Caco-2 (cell line): ENCODE measurements at regions of chr11 and their contacts with region 1.

Region 1: DNA sequence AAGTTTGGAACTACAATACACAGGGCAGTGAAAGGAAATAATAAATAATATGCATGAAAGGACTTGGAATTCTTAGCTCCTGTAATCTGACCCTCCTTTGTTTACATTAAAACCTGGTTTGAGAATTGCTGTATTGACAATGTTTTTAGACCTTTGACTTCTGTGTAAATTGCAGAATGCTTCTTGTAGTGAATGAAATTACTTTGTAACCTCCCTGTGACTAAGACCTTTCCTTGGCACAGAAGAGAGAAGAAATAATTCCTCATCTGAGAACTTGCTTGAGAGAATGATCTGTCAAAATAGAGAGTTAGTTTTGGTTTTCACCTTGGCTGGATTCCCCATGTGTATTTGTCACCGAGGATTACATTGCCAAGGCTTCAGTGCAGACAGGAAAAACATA is 640.0 kb upstream of the ANO5 start:
- DNase-seq: no peak
- H3K4me3 ChIP-seq: no peak overlapping the region
- H3K4me3 Mint-ChIP-seq: no peak overlapping the region
- H3K27ac Mint-ChIP-seq: no peak overlapping the region
- H3K4me1 ChIP-seq: peaks cover 13% of the 10 kb centered on the region
- H3K4me1 Mint-ChIP-seq: no peaks in the 10 kb centered on the region
- H3K27me3 ChIP-seq: no peaks in the 10 kb centered on the region
- H3K27me3 Mint-ChIP-seq: no peaks in the 10 kb centered on the region
- CTCF ChIP-seq: no peak

Region 2: GRCh38 chr11:21489416-21490115 is 63.3 kb before region 1 on chr11:
- CTCF ChIA-PET with region 1: no interaction called
- POLR2A ChIA-PET with region 1: no interaction called
- intact Hi-C with region 1: no loop called
- DNase-seq: no peak
- H3K4me3 ChIP-seq: no peak overlapping the region
- H3K4me3 Mint-ChIP-seq: no peak overlapping the region
- H3K27ac Mint-ChIP-seq: no peak overlapping the region
- H3K4me1 ChIP-seq: no peaks in the 10 kb centered on the region
- H3K4me1 Mint-ChIP-seq: no peaks in the 10 kb centered on the region
- H3K27me3 ChIP-seq: no peaks in the 10 kb centered on the region
- H3K27me3 Mint-ChIP-seq: no peaks in the 10 kb centered on the region
- CTCF ChIP-seq: no peak

Region 3: DNA sequence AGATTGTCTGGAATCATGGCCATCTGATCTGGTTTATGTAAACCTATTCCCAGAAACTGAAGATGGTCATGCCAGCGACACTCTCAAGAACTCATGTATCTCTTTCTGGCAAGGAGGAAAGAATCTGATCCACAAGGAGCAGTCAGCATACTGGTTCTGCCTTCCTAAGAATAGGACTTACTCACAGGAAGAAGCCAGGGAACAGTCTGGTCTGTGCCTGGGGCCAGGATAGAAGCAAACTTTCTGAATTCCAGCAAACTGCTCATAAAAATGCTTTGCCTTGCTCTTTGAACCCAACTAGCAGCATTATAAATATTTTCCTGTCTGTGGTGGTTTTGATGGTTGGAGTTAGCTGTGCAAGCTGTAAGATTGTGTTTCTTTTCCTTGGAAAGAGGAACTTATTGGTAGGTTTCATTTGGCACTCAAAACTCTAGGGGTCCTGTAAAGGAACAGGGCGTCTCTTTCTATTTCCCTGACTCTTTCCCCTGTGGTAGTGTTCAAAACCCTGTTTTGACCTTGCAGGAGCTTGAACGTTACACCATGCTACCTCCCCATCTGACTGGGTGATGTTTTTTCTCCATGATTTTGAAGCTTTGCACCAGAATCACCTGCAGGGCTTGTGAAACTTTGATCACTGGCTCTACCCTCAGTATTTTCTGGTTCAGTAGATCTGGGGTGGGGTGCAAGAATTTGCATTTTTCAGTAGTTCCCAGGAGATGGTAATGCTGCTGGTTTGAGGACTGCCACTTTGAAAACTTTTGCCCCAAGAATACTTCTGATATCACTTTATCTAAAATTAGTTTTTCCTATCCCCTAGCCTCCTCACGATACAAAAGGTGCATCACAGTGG is 12.1 kb after region 1 on chr11:
- CTCF ChIA-PET with region 1: no interaction called
- POLR2A ChIA-PET with region 1: no interaction called
- intact Hi-C with region 1: loop called (anchors 1 kb)
- DNase-seq: peak; percentile 23 to 56
- H3K4me3 ChIP-seq: no peak overlapping the region
- H3K4me3 Mint-ChIP-seq: no peak overlapping the region
- H3K27ac Mint-ChIP-seq: peak overlapping the region; percentile 15
- H3K4me1 ChIP-seq: peaks cover 62% of the 10 kb centered on the region
- H3K4me1 Mint-ChIP-seq: peaks cover 38% of the 10 kb centered on the region
- H3K27me3 ChIP-seq: no peaks in the 10 kb centered on the region
- H3K27me3 Mint-ChIP-seq: no peaks in the 10 kb centered on the region
- CTCF ChIP-seq: no peak

Region 4: DNA sequence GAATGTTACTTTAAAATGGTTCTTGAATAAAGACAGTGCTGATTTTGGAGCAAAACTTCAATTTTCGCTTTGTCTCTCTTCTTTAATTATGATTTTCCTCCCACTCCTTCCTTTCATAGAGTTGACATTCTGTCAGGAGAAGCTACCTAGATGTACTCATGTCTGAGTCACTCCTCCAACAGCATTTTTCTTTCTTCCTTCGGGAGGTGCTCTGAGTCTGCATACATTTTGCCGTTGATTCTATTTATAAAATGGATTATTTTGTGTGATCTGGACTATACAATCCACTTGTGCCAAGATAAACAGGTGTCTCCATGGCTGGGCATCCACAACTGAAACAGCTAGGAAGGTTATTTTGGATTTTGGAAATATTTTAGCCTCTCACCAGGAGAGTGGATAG is 51.7 kb after region 1 on chr11:
- CTCF ChIA-PET with region 1: no interaction called
- POLR2A ChIA-PET with region 1: no interaction called
- intact Hi-C with region 1: no loop called
- DNase-seq: no peak
- H3K4me3 ChIP-seq: no peak overlapping the region
- H3K4me3 Mint-ChIP-seq: no peak overlapping the region
- H3K27ac Mint-ChIP-seq: no peak overlapping the region
- H3K4me1 ChIP-seq: no peaks in the 10 kb centered on the region
- H3K4me1 Mint-ChIP-seq: no peaks in the 10 kb centered on the region
- H3K27me3 ChIP-seq: no peaks in the 10 kb centered on the region
- H3K27me3 Mint-ChIP-seq: no peaks in the 10 kb centered on the region
- CTCF ChIP-seq: no peak